Ascending aorta (tissue), 2 donors: ENCODE measurements at regions of chr5 and their contacts with region 1.

Region 1: GRCh38 chr5:171418316-171418981 is 998 bp upstream of the FGF18 start:
- DNase-seq: peak in 1 of 2 donors; percentile 84
- H3K4me3 ChIP-seq: peak overlapping the region; percentile 59 to 65
- H3K27ac ChIP-seq: no peak overlapping the region
- H3K4me1 ChIP-seq: peaks cover 14 to 15% of the 10 kb centered on the region in 2 donors
- H3K27me3 ChIP-seq: no peaks in the 10 kb centered on the region
- CTCF ChIP-seq: peak; percentile 93 to 99 (median 99)

Region 2: GRCh38 chr5:171387345-171387969 is 31.0 kb before region 1 on chr5 and contains the start of gene NPM1:
- intact Hi-C with region 1: no loop called
- DNase-seq: peak; percentile 78 to 97
- H3K4me3 ChIP-seq: peak within 1 kb of the TSS; percentile 68 to 94
- H3K27ac ChIP-seq: peak within 1 kb of the TSS; percentile 87 to 88
- H3K4me1 ChIP-seq: peaks cover 0 to 18% of the 10 kb centered on the region in 2 donors
- H3K27me3 ChIP-seq: no peaks in the 10 kb centered on the region
- CTCF ChIP-seq: no peak
- total RNA-seq, gene NPM1: 269 TPM

Region 3: GRCh38 chr5:171450423-171451331 is 32.2 kb after region 1 on chr5:
- intact Hi-C with region 1: loop called (anchors 2 kb)
- DNase-seq: peak; percentile 20 to 88
- H3K4me3 ChIP-seq: peak overlapping the region; percentile 68 to 70
- H3K27ac ChIP-seq: peak overlapping the region; percentile 88 to 93
- H3K4me1 ChIP-seq: peaks cover 0 to 12% of the 10 kb centered on the region in 2 donors
- H3K27me3 ChIP-seq: no peaks in the 10 kb centered on the region
- CTCF ChIP-seq: no peak

Region 4: GRCh38 chr5:171521219-171521633 is 102.8 kb after region 1 on chr5:
- intact Hi-C with region 1: loop called (anchors 2 kb)
- DNase-seq: peak in 1 of 2 donors; percentile 92
- H3K4me3 ChIP-seq: no peak overlapping the region
- H3K27ac ChIP-seq: peak overlapping the region; percentile 57 to 67
- H3K4me1 ChIP-seq: peaks cover 10 to 20% of the 10 kb centered on the region in 2 donors
- H3K27me3 ChIP-seq: no peaks in the 10 kb centered on the region
- CTCF ChIP-seq: peak in 1 of 3 experiments; percentile 6

Region 5: GRCh38 chr5:171667341-171668096 is 249.1 kb after region 1 on chr5:
- intact Hi-C with region 1: loop called (anchors 10 kb)
- DNase-seq: peak in 1 of 2 donors; percentile 89
- H3K4me3 ChIP-seq: peak overlapping the region; percentile 1 to 38
- H3K27ac ChIP-seq: peak overlapping the region; percentile 74 to 78
- H3K4me1 ChIP-seq: peaks cover 0 to 9% of the 10 kb centered on the region in 2 donors
- H3K27me3 ChIP-seq: no peaks in the 10 kb centered on the region
- CTCF ChIP-seq: peak in 2 of 3 experiments; percentile 28 to 40

Region 6: DNA sequence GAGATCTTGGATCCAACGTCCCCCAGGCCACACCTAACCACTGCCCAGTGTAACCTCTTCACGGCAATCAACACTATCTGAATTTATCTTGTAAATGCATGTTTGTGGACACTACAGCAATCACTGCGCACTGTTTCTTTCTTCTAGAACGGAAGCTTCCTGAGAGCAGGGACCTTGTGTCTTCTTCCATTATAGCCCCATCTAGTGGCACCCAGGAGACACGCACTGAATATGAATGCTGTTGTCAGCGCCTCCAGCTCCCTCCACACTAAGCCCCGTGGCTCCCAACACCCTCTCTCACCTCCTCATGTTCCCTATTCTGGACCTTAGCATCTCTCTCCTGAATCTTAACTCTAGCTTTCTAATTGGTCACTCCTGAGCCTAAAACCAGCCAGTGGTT is 439.9 kb after region 1 on chr5:
- intact Hi-C with region 1: loop called (anchors 5 kb)
- DNase-seq: no peak
- H3K4me3 ChIP-seq: no peak overlapping the region
- H3K27ac ChIP-seq: no peak overlapping the region
- H3K4me1 ChIP-seq: no peaks in the 10 kb centered on the region
- H3K27me3 ChIP-seq: no peaks in the 10 kb centered on the region
- CTCF ChIP-seq: peak in 2 of 3 experiments; percentile 17 to 34

Region 7: DNA sequence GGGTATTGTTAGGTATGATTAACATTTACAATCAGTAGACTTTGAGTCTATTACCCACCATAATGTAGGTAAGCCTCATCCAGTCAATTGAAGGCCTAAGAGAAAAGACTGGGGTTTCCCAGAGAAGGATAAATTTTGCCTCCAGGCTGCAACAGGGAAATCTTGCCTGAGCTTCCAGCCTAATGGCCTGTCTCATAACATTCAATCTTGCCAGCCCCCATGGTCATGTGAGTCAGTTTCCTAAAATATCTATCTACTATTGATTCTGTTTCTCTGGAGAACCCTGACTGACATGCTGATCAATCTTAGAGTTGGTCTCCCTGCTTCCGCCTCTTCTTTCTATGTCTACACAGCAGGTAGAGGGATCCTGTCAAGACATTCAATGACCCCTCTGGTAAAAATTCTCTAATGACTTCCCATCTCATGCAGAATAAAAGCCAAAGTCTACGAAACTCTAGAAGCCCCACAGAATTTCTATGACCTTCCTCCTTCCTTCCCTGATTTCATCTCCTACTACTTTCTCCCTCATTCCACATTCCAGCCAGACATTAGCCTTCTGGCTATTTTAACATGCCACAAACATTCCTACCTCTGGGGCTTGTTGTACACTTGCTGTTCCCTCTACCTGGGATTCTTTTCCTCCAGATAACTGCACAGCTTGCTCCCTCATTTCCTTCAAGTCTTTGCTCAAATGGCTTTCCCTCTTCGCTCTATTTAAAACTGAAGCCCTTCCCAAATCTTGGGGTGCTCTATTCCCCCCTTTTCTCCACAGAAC is 527.7 kb after region 1 on chr5:
- intact Hi-C with region 1: no loop called
- DNase-seq: no peak
- H3K4me3 ChIP-seq: no peak overlapping the region
- H3K27ac ChIP-seq: no peak overlapping the region
- H3K4me1 ChIP-seq: no peaks in the 10 kb centered on the region
- H3K27me3 ChIP-seq: no peaks in the 10 kb centered on the region
- CTCF ChIP-seq: no peak

Region 8: DNA sequence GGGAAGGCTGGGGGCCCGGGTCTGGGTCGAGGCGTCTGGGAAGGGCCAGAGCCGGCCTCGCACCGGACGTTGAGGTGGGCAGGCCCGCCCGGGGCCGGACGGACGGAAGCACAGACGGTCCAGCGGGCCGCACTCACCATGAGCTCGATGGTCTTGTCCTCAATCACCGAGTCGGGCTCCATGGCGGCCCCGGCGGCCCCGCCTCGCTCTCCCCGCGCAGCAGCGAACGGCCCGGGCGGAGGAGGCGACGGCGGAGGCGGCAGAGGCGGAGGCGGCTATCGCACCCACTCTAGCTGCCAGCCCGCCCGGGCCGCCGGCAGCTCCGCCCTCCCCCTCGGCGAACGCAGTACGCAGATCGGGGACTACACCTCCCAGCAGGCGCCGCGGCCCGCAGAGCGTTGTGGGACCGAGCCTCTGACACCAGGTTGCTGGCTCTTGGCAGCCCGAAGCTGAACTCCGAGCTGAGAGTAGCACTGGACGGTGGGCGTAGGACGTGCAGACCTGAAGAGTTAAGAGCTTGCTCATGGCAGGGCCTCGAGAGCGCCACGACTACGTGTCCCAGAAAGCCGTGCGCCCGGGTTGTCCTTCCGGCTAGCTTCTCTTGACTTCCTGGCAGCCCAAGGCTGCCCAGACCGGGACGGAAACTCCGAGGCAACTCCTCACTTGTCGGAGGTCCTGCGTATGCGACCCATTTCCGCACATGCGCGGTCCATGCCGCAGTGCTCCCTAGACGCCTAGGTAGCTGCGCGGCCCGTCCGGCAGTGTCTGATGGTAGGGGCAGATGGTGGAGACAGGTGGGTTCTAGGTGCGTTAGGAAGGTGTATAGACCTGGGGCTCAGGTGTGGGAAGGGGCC is 588.1 kb after region 1 on chr5 and contains the start of gene FBXW11:
- intact Hi-C with region 1: loop called (anchors 10 kb)
- DNase-seq: peak; percentile 87 to 97
- H3K4me3 ChIP-seq: peak within 1 kb of the TSS; percentile 74 to 88
- H3K27ac ChIP-seq: peak within 1 kb of the TSS; percentile 97 to 99
- H3K4me1 ChIP-seq: peaks cover 6 to 37% of the 10 kb centered on the region in 2 donors
- H3K27me3 ChIP-seq: no peaks in the 10 kb centered on the region
- CTCF ChIP-seq: no peak
- total RNA-seq, gene FBXW11: 34.6 TPM

Region 9: GRCh38 chr5:172188033-172188892 is 769.8 kb after region 1 on chr5 and contains the start of gene STK10:
- intact Hi-C with region 1: loop called (anchors 10 kb)
- DNase-seq: peak; percentile 70 to 95
- H3K4me3 ChIP-seq: peak within 1 kb of the TSS; percentile 61 to 80
- H3K27ac ChIP-seq: peak within 1 kb of the TSS; percentile 86 to 88
- H3K4me1 ChIP-seq: peaks cover 0 to 8% of the 10 kb centered on the region in 2 donors
- H3K27me3 ChIP-seq: no peaks in the 10 kb centered on the region
- CTCF ChIP-seq: peak; percentile 91 to 94 (median 92)
- total RNA-seq, gene STK10: 18.4 TPM